H1 (cell line): ENCODE measurements at regions of chr11 and their contacts with region 1.

Region 1: DNA sequence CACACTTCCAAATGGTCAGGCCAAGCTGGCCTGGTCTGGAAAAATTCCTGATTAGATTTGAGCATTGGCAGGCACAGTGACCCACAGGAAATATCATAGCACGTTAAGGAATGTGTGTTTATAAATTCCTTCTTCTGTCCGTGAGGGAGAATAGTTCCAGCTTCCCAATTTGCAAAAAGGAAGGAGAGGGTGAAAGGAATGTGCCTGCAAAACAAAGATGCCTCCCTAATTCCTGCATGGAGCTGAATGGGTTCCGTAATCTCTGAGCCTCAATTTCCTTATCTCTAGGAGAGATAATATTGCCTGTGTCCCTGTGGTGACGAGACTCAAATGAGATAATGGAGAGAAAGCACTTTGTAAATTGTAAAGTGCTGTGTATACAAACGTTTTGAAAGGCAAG is 105.1 kb downstream of the FEZ1 start:
- DNase-seq: no peak
- H3K4me3 ChIP-seq: no peak overlapping the region
- H3K27ac ChIP-seq: no peak overlapping the region
- H3K4me1 ChIP-seq: peaks cover 0 to 9% (median 7%) of the 10 kb centered on the region in 4 experiments; a peak in 6 of 7 replicates
- H3K27me3 ChIP-seq: no peaks in the 10 kb centered on the region
- CTCF ChIP-seq: no peak
- EP300 ChIP-seq: no peak
- POLR2A ChIP-seq: no peak
- RAD21 ChIP-seq: no peak

Region 2: GRCh38 chr11:125376117-125376516 is 14.8 kb before region 1 on chr11:
- CTCF ChIA-PET with region 1: interaction called, 10 read pairs
- POLR2A ChIA-PET with region 1: interaction called, 6 read pairs
- DNase-seq: no peak
- H3K4me3 ChIP-seq: no peak overlapping the region
- H3K27ac ChIP-seq: no peak overlapping the region
- H3K4me1 ChIP-seq: peaks cover 12 to 25% (median 22%) of the 10 kb centered on the region in 4 experiments
- H3K27me3 ChIP-seq: peaks cover 0 to 4% (median 0%) of the 10 kb centered on the region in 4 experiments; a peak in 2 of 7 replicates
- CTCF ChIP-seq: no peak
- EP300 ChIP-seq: no peak
- POLR2A ChIP-seq: no peak
- RAD21 ChIP-seq: no peak

Region 3: GRCh38 chr11:125457814-125458343 is 66.9 kb after region 1 on chr11:
- CTCF ChIA-PET with region 1: no interaction called
- POLR2A ChIA-PET with region 1: no interaction called
- DNase-seq: peak in 1 of 2 experiments; percentile 40
- H3K4me3 ChIP-seq: no peak overlapping the region
- H3K27ac ChIP-seq: no peak overlapping the region
- H3K4me1 ChIP-seq: peaks cover 0 to 5% (median 1%) of the 10 kb centered on the region in 4 experiments; a peak in 3 of 7 replicates
- H3K27me3 ChIP-seq: no peaks in the 10 kb centered on the region
- CTCF ChIP-seq: no peak
- EP300 ChIP-seq: no peak
- POLR2A ChIP-seq: no peak
- RAD21 ChIP-seq: no peak